GM23248 (cell line): ENCODE measurements at regions of chr6 and their contacts with region 1.

Region 1: DNA sequence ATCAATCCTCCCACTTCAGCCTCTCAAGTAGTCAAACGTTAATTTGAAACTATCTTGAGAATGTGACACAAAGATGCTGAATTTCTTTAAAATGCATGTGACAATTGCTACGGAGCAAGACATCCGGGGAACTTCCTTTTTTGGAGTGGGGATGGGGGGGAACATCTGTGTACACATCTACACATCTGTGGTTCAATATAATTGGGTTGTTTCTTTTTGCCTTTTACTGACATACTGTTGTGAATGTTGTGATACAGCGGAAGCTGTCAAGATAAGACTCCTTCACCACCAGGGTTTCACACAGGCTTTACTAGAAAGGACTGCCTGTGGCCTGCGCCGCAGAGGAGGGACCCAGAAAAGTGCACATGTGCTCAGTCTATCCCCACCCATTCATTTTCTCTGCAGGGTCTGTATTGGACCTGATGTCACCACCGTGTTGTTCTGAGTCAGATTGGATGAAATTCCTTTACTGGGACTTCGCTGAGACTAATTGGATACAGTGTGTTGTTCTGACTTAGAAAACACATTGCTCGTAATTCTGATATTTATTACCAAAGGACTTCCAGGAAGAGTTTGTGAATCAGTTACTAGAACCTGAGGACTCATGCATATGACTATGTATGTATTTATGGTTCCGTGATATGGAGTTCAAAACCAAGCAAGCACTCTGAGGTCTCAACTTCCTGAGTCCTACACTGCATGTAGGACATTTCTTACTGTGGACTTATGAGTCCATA is 98.7 kb upstream of the SGK1 start:
- DNase-seq: peak; percentile 78
- H3K4me3 ChIP-seq: no peak overlapping the region
- H3K27ac ChIP-seq: peak overlapping the region; percentile 77
- H3K4me1 ChIP-seq: peaks cover 35% of the 10 kb centered on the region
- H3K27me3 ChIP-seq: no peaks in the 10 kb centered on the region

Region 2: GRCh38 chr6:134182528-134182927 is 234.1 kb before region 1 on chr6:
- in situ Hi-C with region 1: loop called (anchors 10 kb)
- DNase-seq: no peak
- H3K4me3 ChIP-seq: no peak overlapping the region
- H3K27ac ChIP-seq: no peak overlapping the region
- H3K4me1 ChIP-seq: peaks cover 9% of the 10 kb centered on the region
- H3K27me3 ChIP-seq: no peaks in the 10 kb centered on the region

Region 3: GRCh38 chr6:134882426-134883038 is 465.9 kb after region 1 on chr6:
- in situ Hi-C with region 1: no loop called
- DNase-seq: peak; percentile 73
- H3K4me3 ChIP-seq: no peak overlapping the region
- H3K27ac ChIP-seq: no peak overlapping the region
- H3K4me1 ChIP-seq: peaks cover 11% of the 10 kb centered on the region
- H3K27me3 ChIP-seq: no peaks in the 10 kb centered on the region